Kidney (tissue), 22 donors: ENCODE measurements at regions of chr15 and their contacts with region 1.

Region 1: GRCh38 chr15:78241007-78241406 is 6.6 kb upstream of the ACSBG1 start:
- DNase-seq: peak; percentile 84 to 92 (median 88)
- H3K4me3 ChIP-seq: no peak overlapping the region
- H3K27ac ChIP-seq: no peak overlapping the region
- H3K4me1 ChIP-seq: peaks cover 0 to 14% (median 12%) of the 10 kb centered on the region in 3 donors
- H3K27me3 ChIP-seq: no peaks in the 10 kb centered on the region
- CTCF ChIP-seq: peak; percentile 87

Region 2: DNA sequence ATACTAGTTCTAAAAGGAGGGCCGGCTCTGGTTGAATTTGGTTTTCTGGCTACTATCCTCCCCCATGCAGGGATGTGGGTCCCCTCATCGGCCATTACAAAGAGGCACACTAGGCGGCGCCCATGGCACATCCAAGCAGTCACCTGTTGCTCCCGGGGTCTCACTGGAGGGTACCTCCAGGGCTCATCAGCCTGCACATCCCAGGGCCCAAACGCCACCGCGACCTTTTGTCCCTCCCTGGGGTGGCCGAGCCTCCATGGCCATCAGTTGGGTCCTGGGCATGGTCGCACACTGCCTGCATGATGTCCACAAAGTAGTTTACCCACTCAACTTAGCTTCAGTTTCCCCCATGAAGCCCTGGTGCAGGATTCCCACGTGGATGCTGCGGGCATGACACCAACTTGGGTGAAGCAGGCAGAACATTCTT is 63.5 kb before region 1 on chr15:
- intact Hi-C with region 1: loop called (anchors 10 kb)
- DNase-seq: peak in 3 of 5 donors; percentile 27 to 44 (median 37)
- H3K4me3 ChIP-seq: no peak overlapping the region
- H3K27ac ChIP-seq: no peak overlapping the region
- H3K4me1 ChIP-seq: no peaks in the 10 kb centered on the region
- H3K27me3 ChIP-seq: no peaks in the 10 kb centered on the region
- CTCF ChIP-seq: peak; percentile 28